ENCODE measurements at regions of chr6 and their contacts with region 1.

Region 1: GRCh38 chr6:111642463-111643158 is 36.9 kb upstream of the TRAF3IP2 start:
- DNase-seq: no peak
- H3K4me3 ChIP-seq: no peak overlapping the region
- H3K27ac ChIP-seq: no peak overlapping the region
- H3K4me1 ChIP-seq: peaks cover 0 to 14% (median 13%) of the 10 kb centered on the region in 4 donors
- H3K27me3 ChIP-seq: no peaks in the 10 kb centered on the region
- CTCF ChIP-seq: peak; percentile 60 to 80 (median 63)
- EP300 ChIP-seq: no peak
- POLR2A ChIP-seq: no peak

Region 2: DNA sequence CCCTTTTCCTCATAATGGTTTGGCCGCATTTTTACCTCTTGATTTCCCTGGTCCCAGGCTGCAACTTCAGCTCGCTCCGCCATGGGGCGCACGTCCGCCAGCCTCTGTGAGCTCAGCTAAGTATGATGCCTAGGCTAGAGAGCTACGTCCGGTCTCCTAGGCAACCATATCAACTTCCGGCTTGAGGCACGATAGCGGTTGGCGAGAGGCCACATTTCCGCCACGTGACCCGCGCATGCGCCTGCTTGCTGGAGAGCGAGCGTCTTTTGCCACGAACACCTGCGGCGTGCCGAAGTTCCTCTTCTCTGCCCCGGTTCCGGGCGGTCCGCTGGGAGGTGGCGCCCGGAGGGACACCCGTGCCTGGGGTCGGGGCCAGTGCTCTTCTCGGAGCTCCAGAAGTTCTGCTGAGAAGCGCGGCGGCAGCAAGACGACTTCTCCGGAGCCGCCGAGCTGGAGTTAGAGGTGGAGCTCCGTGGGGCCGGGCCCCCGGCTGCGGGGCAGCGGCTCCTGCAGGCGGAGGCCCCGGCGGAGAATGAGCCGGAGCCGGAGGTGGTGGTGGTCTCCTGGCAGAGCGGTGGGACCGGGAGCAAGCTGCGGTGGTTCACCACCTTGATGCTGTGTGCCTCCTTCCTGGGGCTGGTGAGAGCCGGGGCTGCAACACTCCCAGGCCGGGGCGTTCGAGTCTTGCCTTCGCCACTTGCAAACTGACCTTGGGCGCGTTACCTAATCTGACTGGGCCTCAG is 383.4 kb before region 1 on chr6:
- intact Hi-C with region 1: loop called (anchors 2 kb)
- DNase-seq: peak; percentile 99
- H3K4me3 ChIP-seq: peak overlapping the region; percentile 74 to 91 (median 84)
- H3K27ac ChIP-seq: peak overlapping the region; percentile 85 to 94 (median 93)
- H3K4me1 ChIP-seq: peaks cover 11 to 38% (median 24%) of the 10 kb centered on the region in 4 donors
- H3K27me3 ChIP-seq: peaks cover 0 to 9% (median 0%) of the 10 kb centered on the region in 4 donors
- CTCF ChIP-seq: peak; percentile 93 to 99 (median 93)
- EP300 ChIP-seq: no peak
- POLR2A ChIP-seq: peak; percentile 5

Region 3: GRCh38 chr6:111727802-111728201 is 85.2 kb after region 1 on chr6:
- intact Hi-C with region 1: no loop called
- DNase-seq: no peak
- H3K4me3 ChIP-seq: no peak overlapping the region
- H3K27ac ChIP-seq: no peak overlapping the region
- H3K4me1 ChIP-seq: peaks cover 23 to 51% (median 36%) of the 10 kb centered on the region in 4 donors
- H3K27me3 ChIP-seq: no peaks in the 10 kb centered on the region
- CTCF ChIP-seq: peak; percentile 14 to 46 (median 15)
- EP300 ChIP-seq: no peak
- POLR2A ChIP-seq: no peak